ENCODE measurements at regions of chr17 and their contacts with region 1.

Region 1: DNA sequence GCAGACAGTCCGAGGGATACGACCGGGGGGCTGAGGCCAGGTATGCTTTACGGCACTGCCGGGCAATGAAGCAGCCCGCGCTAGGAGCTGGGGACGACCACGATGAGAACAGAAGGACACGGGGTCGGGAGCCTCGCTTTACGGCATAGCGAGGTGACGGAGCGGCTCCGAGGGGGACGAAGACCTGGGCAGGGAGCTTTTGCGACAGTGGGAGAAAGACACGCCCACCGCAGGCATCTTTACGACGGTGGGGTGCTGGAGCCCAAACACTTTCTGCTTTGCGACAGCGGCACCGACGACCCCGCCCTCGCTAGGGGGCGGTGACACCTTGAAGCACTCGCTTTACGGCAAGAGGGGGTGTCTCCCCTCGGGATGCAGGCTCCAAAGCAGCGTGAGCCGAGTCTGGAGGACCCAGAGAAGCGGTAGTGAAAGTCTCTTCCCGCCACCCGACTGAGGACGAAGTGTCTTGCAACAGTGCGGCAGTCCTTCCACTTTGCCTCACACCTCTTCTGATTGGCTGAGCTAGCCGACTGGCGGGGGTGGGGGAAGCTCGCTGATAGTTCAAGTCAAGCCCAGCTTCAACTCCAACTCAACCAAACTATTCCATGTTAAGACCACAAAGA is 350 bp upstream of the NEURL4 start:
- DNase-seq: peak; percentile 95

Region 2: DNA sequence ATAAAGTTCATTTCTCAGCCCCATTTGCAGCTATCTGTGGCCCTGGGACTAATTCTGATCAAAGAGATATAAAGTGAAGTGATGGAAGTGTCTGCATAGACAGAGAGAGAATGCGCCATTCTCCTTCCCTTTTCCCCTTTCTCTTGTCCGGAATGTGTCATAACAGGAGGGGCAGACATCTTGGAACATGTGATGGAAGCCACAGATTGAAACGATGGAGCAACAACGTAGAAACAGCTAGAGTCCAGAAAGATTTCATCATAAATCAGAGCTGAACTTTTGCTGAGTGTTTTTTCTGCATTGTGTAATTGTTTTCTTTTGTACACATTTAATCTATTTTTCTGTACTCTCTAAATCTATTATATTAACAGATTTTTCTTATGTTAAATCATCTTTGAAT is 161.7 kb before region 1 on chr17:
- CTCF ChIA-PET with region 1: no interaction called
- POLR2A ChIA-PET with region 1: no interaction called
- DNase-seq: no peak

Region 3: DNA sequence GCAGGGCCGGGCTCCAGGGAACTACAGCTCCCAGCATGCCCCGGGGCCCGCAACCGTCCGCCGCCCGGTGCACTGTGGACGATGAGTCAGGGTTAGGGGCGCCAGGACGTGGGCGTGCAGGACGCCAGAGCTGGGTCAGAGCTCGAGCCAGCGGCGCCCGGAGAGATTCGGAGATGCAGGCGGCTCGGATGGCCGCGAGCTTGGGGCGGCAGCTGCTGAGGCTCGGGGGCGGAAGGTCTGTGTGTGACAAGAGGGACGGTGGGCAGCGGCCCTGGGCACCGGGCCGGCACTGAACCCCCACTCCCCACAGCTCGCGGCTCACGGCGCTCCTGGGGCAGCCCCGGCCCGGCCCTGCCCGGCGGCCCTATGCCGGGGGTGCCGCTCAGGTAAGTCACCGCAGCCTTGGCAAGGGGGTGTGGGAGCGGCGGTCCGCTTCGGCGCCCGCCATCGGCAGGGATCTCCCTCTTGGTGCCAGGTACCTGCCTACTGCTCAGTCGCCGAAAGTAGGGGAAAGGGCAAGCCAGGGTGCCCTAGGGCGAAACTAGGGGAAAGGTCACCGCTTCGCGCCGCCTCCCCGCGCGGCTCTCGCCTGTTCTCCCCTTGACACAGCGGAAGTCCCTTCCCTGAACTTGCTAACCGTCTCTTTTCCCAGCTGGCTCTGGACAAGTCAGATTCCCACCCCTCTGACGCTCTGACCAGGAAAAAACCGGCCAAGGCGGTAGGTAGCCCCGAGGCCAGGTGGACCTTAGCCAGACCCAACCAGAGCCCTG is 109.5 kb before region 1 on chr17 and contains the starts of genes ACADVL and DLG4:
- CTCF ChIA-PET with region 1: no interaction called
- POLR2A ChIA-PET with region 1: interaction called, 11 read pairs
- DNase-seq: peak; percentile 71

Region 4: DNA sequence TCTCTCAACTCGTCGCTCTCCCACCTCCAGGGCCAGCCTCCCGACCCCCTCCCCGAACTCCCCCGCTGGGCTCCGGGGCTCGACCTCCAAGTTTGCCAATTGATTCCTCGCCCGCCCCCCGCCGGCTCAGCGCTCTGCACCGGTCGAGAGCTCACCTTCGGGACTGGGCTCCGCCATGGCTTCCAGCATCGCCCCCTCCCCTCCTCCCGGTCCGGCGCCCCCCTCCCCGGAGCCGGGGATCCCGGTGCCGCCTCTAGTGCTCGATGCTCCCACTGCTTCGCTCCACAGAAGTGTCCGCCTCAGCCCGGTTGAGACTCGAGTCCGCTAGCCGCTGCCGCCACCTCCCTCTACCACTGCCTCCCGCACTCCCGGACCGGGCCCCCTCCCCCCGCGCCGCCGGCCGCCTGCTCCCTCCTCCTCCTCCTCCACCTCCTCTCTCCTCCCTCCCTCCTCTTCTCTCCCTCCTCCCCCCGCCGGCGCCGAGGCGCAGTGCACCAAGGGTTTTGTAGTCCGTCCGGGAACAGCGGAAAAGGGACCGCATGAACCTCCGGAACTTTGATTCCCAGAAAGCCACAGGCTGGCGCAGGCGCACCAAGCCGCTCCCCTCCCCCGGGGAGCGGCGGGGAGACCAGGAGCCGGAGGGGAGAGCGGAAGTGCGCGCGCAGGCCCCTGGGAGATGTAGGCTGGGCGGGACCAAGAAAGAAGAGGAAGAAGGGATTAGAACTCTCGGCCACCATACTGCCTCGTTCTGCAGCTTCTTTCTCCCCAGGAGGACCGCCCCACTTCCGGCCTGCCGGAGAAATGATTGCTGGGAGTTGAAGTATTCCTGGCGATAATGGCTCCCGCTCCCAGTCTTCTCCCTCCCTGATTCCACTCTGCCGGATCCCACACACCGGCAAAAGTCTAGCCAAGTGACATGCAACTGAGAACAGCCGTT is 90.1 kb before region 1 on chr17 and contains the start of gene PHF23:
- CTCF ChIA-PET with region 1: no interaction called
- POLR2A ChIA-PET with region 1: interaction called, 11 read pairs
- DNase-seq: peak; percentile 96

Region 5: GRCh38 chr17:7314719-7315569 is 14.5 kb before region 1 on chr17 and contains the start of gene GPS2:
- CTCF ChIA-PET with region 1: interaction called, 5 read pairs
- POLR2A ChIA-PET with region 1: interaction called, 56 read pairs
- DNase-seq: peak; percentile 92

Region 6: DNA sequence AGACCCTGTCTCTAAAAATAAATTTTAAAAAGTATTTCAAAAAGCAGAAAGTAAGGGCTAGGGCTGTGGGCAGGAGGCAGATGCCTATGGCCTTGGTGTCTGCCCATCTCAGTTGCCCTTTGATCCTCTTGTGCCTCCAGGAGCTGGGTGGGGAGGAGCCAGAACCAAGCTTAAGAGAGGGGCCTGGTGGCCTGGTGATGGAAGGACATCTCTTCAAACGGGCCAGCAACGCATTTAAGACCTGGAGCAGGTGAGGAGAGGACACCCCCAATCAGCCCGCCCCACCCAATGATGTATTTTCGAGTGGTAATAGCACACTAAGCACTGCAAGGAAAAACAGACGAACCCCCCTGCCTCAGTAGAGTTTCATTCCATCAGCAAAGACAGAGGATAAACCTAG is 14.9 kb after region 1 on chr17:
- CTCF ChIA-PET with region 1: interaction called, 5 read pairs
- POLR2A ChIA-PET with region 1: interaction called, 17 read pairs
- DNase-seq: no peak

Region 7: DNA sequence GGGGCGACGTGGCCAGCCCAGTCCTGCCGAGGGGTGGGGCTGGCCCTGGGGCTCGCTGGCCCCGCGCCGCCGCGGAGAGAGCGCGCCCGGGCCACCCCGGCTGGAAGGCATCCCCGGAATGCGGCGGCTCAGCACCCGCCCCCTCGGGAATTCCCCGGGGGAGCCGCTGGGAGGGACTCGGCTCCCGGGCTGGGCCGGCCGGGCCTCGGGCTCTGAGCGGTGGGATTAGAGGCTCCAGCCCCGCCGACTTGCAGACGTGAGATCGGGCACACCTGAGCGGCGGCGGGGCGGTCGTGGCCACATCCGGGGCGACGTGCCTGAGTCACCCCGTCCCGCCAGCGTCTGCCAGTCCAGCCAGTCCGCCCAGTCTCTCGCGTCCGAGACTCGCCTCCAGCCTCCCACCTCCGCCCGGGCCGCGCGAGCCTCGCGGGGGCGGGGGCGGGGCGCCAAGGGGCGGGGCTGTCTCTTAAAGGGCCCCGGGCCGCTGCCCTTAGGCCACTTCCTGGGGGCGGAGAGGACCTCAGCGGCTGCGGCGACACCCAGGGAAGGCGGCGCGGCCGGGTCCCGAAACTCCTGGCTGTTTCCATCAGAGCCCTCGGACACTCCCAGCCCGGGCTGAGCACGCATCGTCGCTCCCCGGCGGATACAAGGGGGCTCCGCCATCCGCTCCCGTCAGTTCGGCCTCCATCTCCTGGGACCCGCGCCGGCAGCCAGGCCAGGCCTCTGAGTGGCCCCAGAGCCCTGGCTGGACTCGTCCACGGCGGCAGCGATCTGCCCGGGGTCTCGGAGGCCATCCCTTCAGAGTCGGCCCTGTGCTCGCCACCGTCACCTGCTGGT is 22.4 kb after region 1 on chr17 and contains the start of gene KCTD11:
- CTCF ChIA-PET with region 1: interaction called, 5 read pairs
- POLR2A ChIA-PET with region 1: interaction called, 14 read pairs
- DNase-seq: peak; percentile 80

Region 8: GRCh38 chr17:7383742-7384488 is 54.4 kb after region 1 on chr17:
- CTCF ChIA-PET with region 1: no interaction called
- POLR2A ChIA-PET with region 1: no interaction called
- DNase-seq: no peak

Region 9: GRCh38 chr17:7426896-7427489 is 97.5 kb after region 1 on chr17:
- CTCF ChIA-PET with region 1: no interaction called
- POLR2A ChIA-PET with region 1: no interaction called
- DNase-seq: no peak

Region 10: DNA sequence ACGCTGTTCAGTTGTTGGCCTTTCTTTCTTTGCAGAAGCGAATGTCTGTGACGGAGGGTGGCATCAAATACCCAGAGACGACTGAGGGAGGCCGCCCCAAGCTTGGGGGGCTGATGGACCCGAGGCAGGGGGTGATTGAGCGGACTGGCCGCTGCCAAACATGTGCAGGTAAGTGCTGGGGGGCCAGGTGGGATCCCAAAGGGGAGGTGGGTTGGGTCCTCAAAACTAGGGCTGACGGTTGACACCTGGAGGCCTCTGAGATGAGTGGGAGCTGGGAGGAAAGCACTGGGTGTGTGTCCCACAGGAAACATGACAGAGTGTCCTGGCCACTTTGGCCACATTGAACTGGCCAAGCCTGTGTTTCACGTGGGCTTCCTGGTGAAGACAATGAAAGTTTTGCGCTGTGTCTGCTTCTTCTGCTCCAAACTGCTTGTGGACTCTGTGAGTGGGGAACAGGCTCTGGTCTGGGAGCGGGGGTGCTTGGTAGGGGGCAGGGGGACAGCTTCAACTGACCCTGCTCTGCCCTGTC is 166.5 kb after region 1 on chr17:
- CTCF ChIA-PET with region 1: no interaction called
- POLR2A ChIA-PET with region 1: no interaction called
- DNase-seq: no peak

Region 11: GRCh38 chr17:7583253-7584109 is 254.0 kb after region 1 on chr17 and contains the start of gene MPDU1:
- CTCF ChIA-PET with region 1: no interaction called
- POLR2A ChIA-PET with region 1: interaction called, 10 read pairs
- DNase-seq: peak; percentile 90